ENCODE measurements at regions of chr17 and their contacts with region 1.

Region 1: DNA sequence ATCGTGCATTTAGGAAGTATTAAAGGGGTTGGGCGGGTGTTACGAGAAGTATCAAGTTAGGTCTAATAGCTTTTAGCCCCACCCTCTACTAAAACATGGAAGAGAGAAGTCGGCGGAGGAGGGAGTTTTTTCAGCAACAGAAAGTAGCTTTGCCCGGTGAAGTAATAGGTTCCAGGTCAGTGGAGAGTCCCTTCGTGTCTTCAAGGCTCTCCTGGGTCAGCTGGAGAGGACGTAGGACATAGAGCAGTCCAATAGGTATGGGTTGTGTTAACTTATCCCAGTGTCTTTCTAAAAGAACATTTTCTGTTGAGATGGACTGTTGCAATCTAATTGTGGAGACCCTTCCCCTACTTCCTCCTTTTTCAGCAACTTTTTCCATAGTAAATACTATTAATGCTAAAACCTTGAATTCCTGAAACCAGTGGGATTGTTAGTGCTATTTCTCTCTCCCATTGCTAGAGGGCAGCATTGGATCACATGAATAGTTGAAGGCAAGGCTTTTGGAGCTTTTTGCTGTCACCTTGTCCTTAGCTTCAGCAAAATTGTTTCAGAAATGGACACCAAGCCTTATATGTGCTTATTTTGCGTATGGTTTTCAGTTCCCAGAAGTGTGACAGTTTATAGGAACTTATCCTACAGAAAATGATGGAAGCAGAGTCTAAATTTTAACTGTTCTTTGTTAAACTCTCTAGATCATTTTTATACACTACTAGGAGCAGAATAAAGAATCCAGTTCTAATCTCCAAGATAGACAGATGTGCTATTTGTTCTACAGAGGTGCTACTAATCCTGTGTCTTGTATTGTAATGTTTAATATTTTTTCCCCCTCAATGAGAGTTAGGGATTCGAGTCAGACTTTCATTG is 38.4 kb downstream of the UTP18 start:
- DNase-seq: peak; percentile 38
- H3K4me3 Mint-ChIP-seq: no peak overlapping the region
- H3K27ac Mint-ChIP-seq: no peak overlapping the region
- H3K4me1 Mint-ChIP-seq: no peaks in the 10 kb centered on the region
- H3K27me3 Mint-ChIP-seq: no peaks in the 10 kb centered on the region
- CTCF ChIP-seq: peak; percentile 68

Region 2: DNA sequence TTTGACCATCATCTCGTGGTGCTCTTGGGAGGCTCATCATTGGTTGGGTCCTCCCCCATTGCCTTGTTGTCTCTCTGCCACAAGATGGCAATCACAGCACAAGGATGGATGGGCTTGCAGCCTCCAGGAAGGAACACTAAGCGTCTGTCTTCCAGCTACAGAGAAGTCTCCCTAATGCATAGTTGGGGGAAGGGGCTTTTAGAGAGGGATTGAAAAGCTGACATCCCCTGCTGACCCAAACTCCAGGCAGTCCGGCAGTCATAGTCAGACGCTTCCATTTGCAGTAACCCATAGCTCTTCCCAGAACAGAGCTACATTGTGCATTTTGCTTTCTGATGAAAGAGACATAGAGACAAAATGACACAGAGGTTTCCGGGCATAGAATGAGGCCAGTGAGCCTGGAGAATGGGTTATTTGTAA is 73.0 kb after region 1 on chr17:
- CTCF ChIA-PET with region 1: interaction called, 13 read pairs
- intact Hi-C with region 1: no loop called
- DNase-seq: peak; percentile 70
- H3K4me3 Mint-ChIP-seq: peak overlapping the region; percentile 34
- H3K27ac Mint-ChIP-seq: peak overlapping the region; percentile 69
- H3K4me1 Mint-ChIP-seq: peaks cover 9% of the 10 kb centered on the region
- H3K27me3 Mint-ChIP-seq: peaks cover 76% of the 10 kb centered on the region
- CTCF ChIP-seq: peak; percentile 82

Measured in Calu3 (cell line).